ENCODE measurements at regions of chr10 and their contacts with region 1.

Region 1: GRCh38 chr10:100373298-100374136 is 26.5 kb downstream of the SCD start:
- DNase-seq: peak; percentile 98 to 99
- H3K4me3 ChIP-seq: peak overlapping the region; percentile 48
- H3K4me3 Mint-ChIP-seq: no peak overlapping the region
- H3K27ac Mint-ChIP-seq: no peak overlapping the region
- H3K4me1 ChIP-seq: peaks cover 38% of the 10 kb centered on the region
- H3K4me1 Mint-ChIP-seq: peaks cover 20% of the 10 kb centered on the region
- H3K27me3 ChIP-seq: no peaks in the 10 kb centered on the region
- H3K27me3 Mint-ChIP-seq: no peaks in the 10 kb centered on the region
- CTCF ChIP-seq: no peak

Region 2: GRCh38 chr10:100065084-100065660 is 308.3 kb before region 1 on chr10:
- CTCF ChIA-PET with region 1: no interaction called
- POLR2A ChIA-PET with region 1: no interaction called
- intact Hi-C with region 1: no loop called
- DNase-seq: no peak
- H3K4me3 ChIP-seq: no peak overlapping the region
- H3K4me3 Mint-ChIP-seq: no peak overlapping the region
- H3K27ac Mint-ChIP-seq: no peak overlapping the region
- H3K4me1 ChIP-seq: no peaks in the 10 kb centered on the region
- H3K4me1 Mint-ChIP-seq: no peaks in the 10 kb centered on the region
- H3K27me3 ChIP-seq: no peaks in the 10 kb centered on the region
- H3K27me3 Mint-ChIP-seq: no peaks in the 10 kb centered on the region
- CTCF ChIP-seq: no peak

Region 3: GRCh38 chr10:100267237-100268104 is 106.0 kb before region 1 on chr10 and contains the start of gene CWF19L1:
- CTCF ChIA-PET with region 1: no interaction called
- POLR2A ChIA-PET with region 1: interaction called, 10 read pairs
- intact Hi-C with region 1: no loop called
- DNase-seq: peak; percentile 90 to 91
- H3K4me3 ChIP-seq: peak within 1 kb of the TSS; percentile 89
- H3K4me3 Mint-ChIP-seq: peak within 1 kb of the TSS; percentile 99
- H3K27ac Mint-ChIP-seq: peak within 1 kb of the TSS; percentile 99
- H3K4me1 ChIP-seq: no peaks in the 10 kb centered on the region
- H3K4me1 Mint-ChIP-seq: peaks cover 6% of the 10 kb centered on the region
- H3K27me3 ChIP-seq: no peaks in the 10 kb centered on the region
- H3K27me3 Mint-ChIP-seq: no peaks in the 10 kb centered on the region
- CTCF ChIP-seq: no peak
- total RNA-seq, gene CWF19L1: 41.1 and 41.2 TPM in 2 replicates

Region 4: GRCh38 chr10:100346765-100347567 is 26.6 kb before region 1 on chr10 and contains the start of gene SCD:
- CTCF ChIA-PET with region 1: interaction called, 18 read pairs
- POLR2A ChIA-PET with region 1: interaction called, 155 read pairs
- intact Hi-C with region 1: loop called (anchors 1 kb)
- DNase-seq: peak; percentile 94 to 95
- H3K4me3 ChIP-seq: peak within 1 kb of the TSS; percentile 90
- H3K4me3 Mint-ChIP-seq: peak within 1 kb of the TSS; percentile 96
- H3K27ac Mint-ChIP-seq: peak within 1 kb of the TSS; percentile 75
- H3K4me1 ChIP-seq: peaks cover 31% of the 10 kb centered on the region
- H3K4me1 Mint-ChIP-seq: peaks cover 43% of the 10 kb centered on the region
- H3K27me3 ChIP-seq: no peaks in the 10 kb centered on the region
- H3K27me3 Mint-ChIP-seq: no peaks in the 10 kb centered on the region
- CTCF ChIP-seq: no peak
- total RNA-seq, gene SCD: 449 and 457 TPM in 2 replicates

Region 5: GRCh38 chr10:100359529-100360150 is 13.9 kb before region 1 on chr10:
- CTCF ChIA-PET with region 1: interaction called, 6 read pairs
- POLR2A ChIA-PET with region 1: interaction called, 38 read pairs
- intact Hi-C with region 1: loop called (anchors 1 kb)
- DNase-seq: peak; percentile 74 to 80
- H3K4me3 ChIP-seq: no peak overlapping the region
- H3K4me3 Mint-ChIP-seq: peak overlapping the region; percentile 46
- H3K27ac Mint-ChIP-seq: peak overlapping the region; percentile 39
- H3K4me1 ChIP-seq: peaks cover 67% of the 10 kb centered on the region
- H3K4me1 Mint-ChIP-seq: peaks cover 59% of the 10 kb centered on the region
- H3K27me3 ChIP-seq: no peaks in the 10 kb centered on the region
- H3K27me3 Mint-ChIP-seq: no peaks in the 10 kb centered on the region
- CTCF ChIP-seq: no peak

Region 6: GRCh38 chr10:100392686-100393003 is 19.1 kb after region 1 on chr10:
- CTCF ChIA-PET with region 1: no interaction called
- POLR2A ChIA-PET with region 1: no interaction called
- intact Hi-C with region 1: no loop called
- DNase-seq: no peak
- H3K4me3 ChIP-seq: no peak overlapping the region
- H3K4me3 Mint-ChIP-seq: no peak overlapping the region
- H3K27ac Mint-ChIP-seq: no peak overlapping the region
- H3K4me1 ChIP-seq: no peaks in the 10 kb centered on the region
- H3K4me1 Mint-ChIP-seq: peaks cover 7% of the 10 kb centered on the region
- H3K27me3 ChIP-seq: no peaks in the 10 kb centered on the region
- H3K27me3 Mint-ChIP-seq: no peaks in the 10 kb centered on the region
- CTCF ChIP-seq: no peak

Region 7: DNA sequence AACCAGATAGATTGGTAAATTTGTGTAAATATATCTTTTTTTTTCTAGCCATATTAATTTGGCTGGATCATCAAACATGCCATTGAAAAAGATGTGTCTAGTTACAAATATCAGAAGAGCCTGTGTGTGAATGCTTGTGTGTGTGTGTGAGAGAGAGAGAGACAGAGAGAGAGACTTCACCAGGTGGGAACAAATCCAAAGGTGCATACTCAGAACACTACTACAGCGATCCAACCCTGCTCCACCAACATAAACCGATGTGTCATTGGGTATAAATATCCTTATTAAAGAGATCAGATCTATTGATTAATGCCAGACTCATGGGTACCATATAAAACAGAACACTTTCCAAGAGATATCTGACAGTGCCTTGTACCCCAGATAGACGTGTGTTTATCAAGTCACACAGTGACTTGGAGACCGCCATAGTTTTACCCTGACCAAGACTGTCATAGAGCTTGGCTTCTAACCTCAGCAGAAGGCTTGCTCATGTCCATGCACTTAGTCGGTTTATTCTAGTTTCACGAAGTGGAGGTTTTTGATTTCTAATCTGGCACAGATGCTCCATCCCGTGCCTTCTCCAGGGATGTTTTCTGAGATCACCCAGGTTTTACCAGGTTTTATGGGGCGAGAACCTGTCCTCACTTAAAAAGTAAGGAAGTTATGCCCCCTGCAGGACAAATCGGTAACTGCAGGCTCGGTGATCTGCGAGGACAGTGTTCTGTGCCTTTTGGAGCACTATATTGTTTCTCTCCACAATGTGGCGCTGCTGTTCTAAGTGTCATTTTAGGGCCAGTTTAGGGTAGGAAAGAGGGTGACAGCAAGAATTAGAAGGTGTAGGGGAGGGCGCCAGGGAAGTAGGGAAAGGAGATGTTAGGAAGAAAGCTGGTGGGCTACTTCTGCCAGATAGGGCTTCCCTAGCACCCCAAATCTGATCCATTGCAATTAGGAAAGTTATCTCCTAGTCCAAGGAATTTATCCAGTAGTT is 60.0 kb after region 1 on chr10:
- CTCF ChIA-PET with region 1: interaction called, 3 read pairs
- POLR2A ChIA-PET with region 1: interaction called, 5 read pairs
- intact Hi-C with region 1: loop called (anchors 2 kb)
- DNase-seq: peak; percentile 95
- H3K4me3 ChIP-seq: no peak overlapping the region
- H3K4me3 Mint-ChIP-seq: no peak overlapping the region
- H3K27ac Mint-ChIP-seq: no peak overlapping the region
- H3K4me1 ChIP-seq: no peaks in the 10 kb centered on the region
- H3K4me1 Mint-ChIP-seq: no peaks in the 10 kb centered on the region
- H3K27me3 ChIP-seq: no peaks in the 10 kb centered on the region
- H3K27me3 Mint-ChIP-seq: no peaks in the 10 kb centered on the region
- CTCF ChIP-seq: peak; percentile 96 to 97

Region 8: DNA sequence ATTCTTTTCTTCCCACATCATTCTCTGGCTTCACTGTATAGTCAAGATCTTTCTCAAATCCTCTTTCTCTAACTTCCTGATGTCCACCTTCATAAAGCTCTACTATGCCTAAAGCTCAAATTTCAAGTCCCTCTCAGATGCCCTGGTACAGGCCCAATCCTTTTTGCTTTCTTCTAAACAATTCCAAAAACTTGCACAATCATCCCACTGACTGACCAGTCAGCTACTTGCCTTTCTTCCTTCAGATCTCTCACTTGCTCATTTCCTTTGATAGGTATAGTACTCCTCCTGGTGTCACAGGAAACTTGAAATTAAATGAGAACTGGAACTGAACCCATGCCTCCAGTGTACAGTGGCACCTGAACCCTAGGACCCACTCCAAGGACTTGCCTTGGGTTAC is 127.9 kb after region 1 on chr10:
- CTCF ChIA-PET with region 1: no interaction called
- POLR2A ChIA-PET with region 1: no interaction called
- intact Hi-C with region 1: no loop called
- DNase-seq: no peak
- H3K4me3 ChIP-seq: no peak overlapping the region
- H3K4me3 Mint-ChIP-seq: no peak overlapping the region
- H3K27ac Mint-ChIP-seq: no peak overlapping the region
- H3K4me1 ChIP-seq: peaks cover 15% of the 10 kb centered on the region
- H3K4me1 Mint-ChIP-seq: peaks cover 12% of the 10 kb centered on the region
- H3K27me3 ChIP-seq: no peaks in the 10 kb centered on the region
- H3K27me3 Mint-ChIP-seq: no peaks in the 10 kb centered on the region
- CTCF ChIP-seq: no peak

Measured in Caco-2 (cell line).